SK-N-SH (cell line): ENCODE measurements at regions of chr22 and their contacts with region 1.

Region 1: GRCh38 chr22:19986410-19987341 is 29.9 kb downstream of the ARVCF start:
- DNase-seq: peak; percentile 99
- H3K4me3 ChIP-seq: peak overlapping the region; percentile 83 to 87
- H3K27ac ChIP-seq: peak overlapping the region; percentile 36 to 87; a peak in 3 of 4 replicates
- H3K4me1 ChIP-seq: peaks cover 17 to 70% of the 10 kb centered on the region in 2 experiments; a peak in 3 of 4 replicates
- H3K27me3 ChIP-seq: no peaks in the 10 kb centered on the region
- CTCF ChIP-seq: no peak
- EP300 ChIP-seq: no peak
- RAD21 ChIP-seq: no peak

Region 2: DNA sequence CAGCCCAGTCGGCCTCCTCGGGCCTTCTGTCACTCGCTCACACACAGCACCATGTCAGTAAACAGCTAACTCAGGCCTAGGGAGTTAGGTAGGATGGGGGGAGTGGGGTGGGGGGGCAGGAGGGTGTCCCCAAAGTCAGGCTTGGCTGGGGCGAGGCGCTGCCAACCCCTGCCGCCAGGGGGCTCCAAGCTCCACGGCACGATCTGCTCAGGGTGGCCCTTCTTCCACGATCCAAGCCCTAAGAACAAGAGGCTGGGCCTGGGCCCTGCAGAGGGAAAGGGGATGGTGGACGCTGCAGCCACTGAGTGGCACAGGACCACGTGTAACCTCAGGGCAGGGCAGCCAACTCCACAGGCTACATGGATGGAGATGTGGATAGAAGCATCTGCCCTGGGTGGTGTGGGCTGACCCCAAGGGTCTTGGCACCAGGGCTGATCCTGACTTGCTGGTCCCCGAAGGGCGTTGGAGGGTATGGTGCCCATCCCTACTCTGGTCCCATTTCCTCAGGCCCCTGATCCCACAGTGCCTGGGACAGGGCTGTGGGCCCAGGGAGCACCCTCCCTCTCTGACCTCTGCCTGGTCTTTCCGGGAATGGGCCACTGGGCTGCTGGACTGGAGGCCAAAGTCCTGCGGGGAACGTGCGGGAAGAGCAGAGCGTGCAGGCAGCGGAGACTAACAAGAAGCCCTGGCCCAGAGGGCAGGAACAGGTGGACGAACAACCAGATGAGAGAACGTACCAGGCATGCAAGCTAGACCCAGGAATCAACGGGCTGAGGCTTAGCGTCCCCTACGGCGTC is 16.0 kb before region 1 on chr22:
- CTCF ChIA-PET with region 1: interaction called, 24 read pairs
- POLR2A ChIA-PET with region 1: interaction called, 5 read pairs
- DNase-seq: peak; percentile 91
- H3K4me3 ChIP-seq: peak overlapping the region in 1 of 2 experiments; percentile 39; a peak in 1 of 4 replicates
- H3K27ac ChIP-seq: peak overlapping the region in 1 of 2 experiments; percentile 35; a peak in 1 of 4 replicates
- H3K4me1 ChIP-seq: peaks cover 0 to 24% of the 10 kb centered on the region in 2 experiments; a peak in 1 of 4 replicates
- H3K27me3 ChIP-seq: no peaks in the 10 kb centered on the region
- CTCF ChIP-seq: peak; percentile 86
- EP300 ChIP-seq: no peak
- RAD21 ChIP-seq: peak; percentile 91

Region 3: GRCh38 chr22:20008221-20008995 is 21.7 kb after region 1 on chr22:
- CTCF ChIA-PET with region 1: interaction called, 224 read pairs
- POLR2A ChIA-PET with region 1: interaction called, 10 read pairs
- DNase-seq: peak; percentile 53
- H3K4me3 ChIP-seq: no peak overlapping the region
- H3K27ac ChIP-seq: peak overlapping the region in 1 of 2 experiments; percentile 99; a peak in 2 of 4 replicates
- H3K4me1 ChIP-seq: peaks cover 0 to 65% of the 10 kb centered on the region in 2 experiments; a peak in 2 of 4 replicates
- H3K27me3 ChIP-seq: no peaks in the 10 kb centered on the region
- CTCF ChIP-seq: no peak
- EP300 ChIP-seq: no peak
- RAD21 ChIP-seq: no peak

Region 4: DNA sequence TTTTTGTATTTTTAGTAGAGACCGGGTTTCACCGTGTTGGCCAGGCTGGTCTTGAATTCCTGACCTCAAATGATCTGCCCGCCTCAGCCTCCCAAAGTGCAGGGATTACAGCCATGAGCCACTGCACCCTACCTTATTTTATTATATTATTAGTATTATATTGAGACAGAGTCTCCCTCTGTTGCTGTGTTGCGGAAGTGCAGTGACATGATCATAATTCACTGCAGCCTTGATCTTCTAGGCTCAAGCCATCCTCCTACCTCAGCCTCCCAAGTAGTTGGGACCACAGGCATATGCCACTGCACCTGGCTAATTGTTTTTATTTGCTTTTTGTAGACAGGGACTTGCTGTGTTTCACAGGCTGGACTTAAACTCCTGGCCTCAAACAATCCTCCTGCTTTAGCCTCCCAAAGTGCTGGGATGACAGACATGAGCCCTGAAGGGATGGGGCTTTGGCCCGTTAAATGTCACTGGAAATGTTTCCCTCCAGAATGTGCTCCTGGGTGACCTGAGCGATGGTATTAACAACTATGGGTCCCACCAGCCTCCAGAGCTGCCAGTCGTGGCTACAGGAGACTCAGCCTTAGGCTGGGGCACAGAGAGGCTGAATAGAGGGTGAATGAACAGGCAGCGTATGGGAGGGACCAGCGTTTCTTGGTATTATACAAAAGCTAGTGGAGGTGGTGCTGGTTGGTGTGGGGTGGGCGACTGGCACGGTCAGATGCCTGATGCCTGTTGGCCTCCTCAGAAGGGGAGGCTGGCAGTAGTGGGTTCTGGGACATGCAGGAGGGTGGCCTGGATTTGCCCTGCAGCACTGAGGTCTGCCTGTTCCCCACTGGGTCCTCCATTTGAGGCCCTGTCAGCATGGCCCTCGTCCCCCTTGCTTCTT is 41.5 kb after region 1 on chr22:
- CTCF ChIA-PET with region 1: no interaction called
- POLR2A ChIA-PET with region 1: no interaction called
- DNase-seq: no peak
- H3K4me3 ChIP-seq: no peak overlapping the region
- H3K27ac ChIP-seq: no peak overlapping the region
- H3K4me1 ChIP-seq: peaks cover 0 to 27% of the 10 kb centered on the region in 2 experiments; a peak in 1 of 4 replicates
- H3K27me3 ChIP-seq: no peaks in the 10 kb centered on the region
- CTCF ChIP-seq: peak; percentile 51
- EP300 ChIP-seq: no peak
- RAD21 ChIP-seq: peak; percentile 33